Activated CD8-positive, alpha-beta memory T cell treated with anti-CD3 and anti-CD28 coated beads, Interleukin-2, amount 10 ng/mL, durations not matched to agents 7 days and 5 days (primary cell): ENCODE measurements at regions of chr17 and their contacts with region 1.

Region 1: GRCh38 chr17:81101614-81102306 is 63.5 kb upstream of the PVALEF start:
- DNase-seq: peak; percentile 92
- ATAC-seq: peak; percentile 92
- H3K4me3 Mint-ChIP-seq: no peak overlapping the region
- H3K27ac Mint-ChIP-seq: no peak overlapping the region
- H3K4me1 Mint-ChIP-seq: peaks cover 4% of the 10 kb centered on the region
- H3K27me3 Mint-ChIP-seq: no peaks in the 10 kb centered on the region

Region 2: GRCh38 chr17:80991645-80992076 is 110.1 kb before region 1 on chr17 and contains the start of gene CHMP6:
- CTCF ChIA-PET with region 1: interaction called, 41 read pairs
- DNase-seq: peak; percentile 74
- ATAC-seq: peak; percentile 71
- H3K4me3 Mint-ChIP-seq: peak within 1 kb of the TSS; percentile 74
- H3K27ac Mint-ChIP-seq: peak within 1 kb of the TSS; percentile 76
- H3K4me1 Mint-ChIP-seq: peaks cover 32% of the 10 kb centered on the region
- H3K27me3 Mint-ChIP-seq: peaks cover 8% of the 10 kb centered on the region
- total RNA-seq, gene CHMP6: 29.8 to 34.6 TPM

Region 3: GRCh38 chr17:81018044-81018802 is 83.5 kb before region 1 on chr17:
- CTCF ChIA-PET with region 1: interaction called, 135 read pairs
- DNase-seq: peak; percentile 80
- ATAC-seq: peak; percentile 95
- H3K4me3 Mint-ChIP-seq: peak overlapping the region; percentile 65
- H3K27ac Mint-ChIP-seq: peak overlapping the region; percentile 90
- H3K4me1 Mint-ChIP-seq: peaks cover 33% of the 10 kb centered on the region
- H3K27me3 Mint-ChIP-seq: no peaks in the 10 kb centered on the region

Region 4: GRCh38 chr17:81034779-81035388 is 66.9 kb before region 1 on chr17 and contains the start of gene BAIAP2:
- CTCF ChIA-PET with region 1: interaction called, 15 read pairs
- DNase-seq: peak; percentile 96
- ATAC-seq: peak; percentile 83
- H3K4me3 Mint-ChIP-seq: peak within 1 kb of the TSS; percentile 74
- H3K27ac Mint-ChIP-seq: no peak within 1 kb of the TSS
- H3K4me1 Mint-ChIP-seq: peaks cover 6% of the 10 kb centered on the region
- H3K27me3 Mint-ChIP-seq: peaks cover 40% of the 10 kb centered on the region
- total RNA-seq, gene BAIAP2: 4.8 to 7.0 TPM

Region 5: DNA sequence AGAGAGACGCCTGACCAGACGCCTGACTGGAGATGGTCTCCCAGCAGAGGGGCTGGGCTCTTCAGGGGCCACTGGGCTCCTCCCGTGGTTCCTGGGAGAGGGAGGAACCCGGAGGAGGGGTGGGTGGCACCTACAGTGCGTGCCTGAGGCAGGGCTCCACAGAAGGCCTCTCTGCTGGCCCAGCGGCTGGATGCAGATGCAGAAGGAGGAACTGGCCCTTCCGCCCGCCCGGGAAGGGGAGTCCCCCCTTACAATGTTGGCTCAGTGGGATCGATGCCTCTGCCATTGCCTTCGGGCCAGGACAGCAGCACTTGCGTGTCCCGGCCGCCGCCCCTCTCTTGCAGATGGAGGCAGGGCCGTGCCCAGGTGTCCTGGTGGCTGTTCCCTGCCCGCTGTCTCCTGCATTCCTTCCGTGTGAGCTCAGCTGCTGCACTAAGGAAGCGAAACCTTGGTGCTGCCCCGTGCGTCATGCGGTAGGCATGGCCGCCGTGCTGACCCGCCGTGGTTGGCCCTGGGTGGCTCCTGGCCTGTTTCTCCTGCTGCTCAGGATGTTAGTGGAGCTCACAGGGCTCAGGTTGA is 51.7 kb before region 1 on chr17:
- CTCF ChIA-PET with region 1: interaction called, 14 read pairs
- DNase-seq: no peak
- ATAC-seq: no peak
- H3K4me3 Mint-ChIP-seq: no peak overlapping the region
- H3K27ac Mint-ChIP-seq: no peak overlapping the region
- H3K4me1 Mint-ChIP-seq: peaks cover 15% of the 10 kb centered on the region
- H3K27me3 Mint-ChIP-seq: peaks cover 2% of the 10 kb centered on the region